BJ (cell line): ENCODE measurements at regions of chr15 and their contacts with region 1.

Region 1: DNA sequence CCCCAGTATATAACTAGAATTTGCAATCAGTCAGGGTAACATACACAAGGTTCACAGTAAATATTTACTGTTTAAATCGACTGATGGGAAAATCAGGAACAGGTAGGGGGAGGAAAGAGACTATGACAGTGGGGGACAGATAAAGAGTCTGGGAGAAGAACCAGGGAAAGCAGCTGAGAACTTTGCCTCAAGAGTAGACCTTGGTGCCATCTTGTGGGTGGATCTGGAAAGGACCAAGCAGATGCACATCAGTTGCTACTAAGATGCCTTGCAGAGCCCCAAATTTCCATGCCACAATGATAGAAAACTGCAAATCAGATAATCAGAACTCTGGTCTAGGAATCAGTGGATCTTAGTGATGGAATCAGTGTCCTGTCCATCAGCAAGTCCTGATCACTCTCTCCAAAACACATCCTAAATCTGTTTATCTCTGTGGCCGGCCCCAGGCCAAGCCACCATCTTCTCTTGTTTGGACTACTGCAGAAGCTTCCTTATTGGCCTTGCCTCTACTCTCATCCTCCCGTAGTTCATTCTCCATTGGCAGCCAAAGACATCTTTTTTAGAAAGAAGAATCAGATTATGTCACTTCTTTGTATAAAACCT is 62.7 kb downstream of the PDE8A start:
- DNase-seq: no peak
- H3K4me3 ChIP-seq: no peak overlapping the region
- H3K27me3 ChIP-seq: no peaks in the 10 kb centered on the region
- CTCF ChIP-seq: peak; percentile 78

Region 2: DNA sequence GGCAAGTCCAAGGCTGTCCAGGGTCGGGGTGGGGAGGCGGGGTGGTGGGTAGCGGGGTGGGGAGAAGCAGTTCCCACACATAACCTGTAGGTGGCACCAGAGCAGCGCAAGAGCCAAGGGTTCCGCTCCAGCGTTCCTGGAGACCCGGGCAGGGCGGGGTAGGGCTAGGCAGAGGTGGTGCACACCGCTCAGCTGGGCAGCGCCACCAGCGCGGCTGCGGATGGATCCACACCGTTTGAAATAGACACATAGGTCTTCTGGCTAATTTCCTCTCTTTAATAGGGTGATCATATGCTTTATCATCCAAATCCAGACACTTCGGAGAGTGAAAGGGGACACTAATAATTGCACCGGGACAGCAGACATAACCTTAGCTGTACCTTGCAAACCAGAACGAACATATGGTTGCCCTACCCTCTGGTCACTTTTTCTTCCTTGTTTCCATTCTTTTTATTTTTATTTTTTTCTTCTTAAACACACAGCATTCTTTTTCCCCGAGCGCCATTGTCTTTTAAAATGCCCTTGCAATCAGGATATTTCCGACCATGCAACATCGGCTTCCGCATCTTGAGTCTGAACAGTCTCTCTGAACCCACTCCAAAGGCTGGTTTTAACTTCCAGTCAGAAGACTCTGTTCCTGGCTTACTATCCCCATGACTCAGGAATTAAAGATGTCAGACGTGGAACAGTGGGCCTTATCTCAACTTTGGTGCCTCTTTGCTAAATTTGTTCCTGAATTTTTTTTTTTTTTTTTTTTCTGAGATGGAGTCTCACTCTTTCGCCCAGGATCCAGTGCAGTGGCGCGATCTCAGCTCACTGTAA is 456.1 kb before region 1 on chr15:
- CTCF ChIA-PET with region 1: interaction called, 10 read pairs
- POLR2A ChIA-PET with region 1: no interaction called
- DNase-seq: no peak
- H3K4me3 ChIP-seq: peak overlapping the region; percentile 39
- H3K27me3 ChIP-seq: peaks cover 2% of the 10 kb centered on the region
- CTCF ChIP-seq: peak; percentile 85

Region 3: GRCh38 chr15:84600851-84601838 is 443.2 kb before region 1 on chr15 and contains the start of gene ZSCAN2:
- CTCF ChIA-PET with region 1: interaction called, 11 read pairs
- POLR2A ChIA-PET with region 1: no interaction called
- DNase-seq: peak; percentile 59
- H3K4me3 ChIP-seq: peak within 1 kb of the TSS; percentile 97
- H3K27me3 ChIP-seq: no peaks in the 10 kb centered on the region
- CTCF ChIP-seq: no peak
- polyA plus RNA-seq, gene ZSCAN2: 5.9 and 6.3 TPM in 2 replicates

Region 4: GRCh38 chr15:84947947-84948830 is 96.2 kb before region 1 on chr15:
- CTCF ChIA-PET with region 1: interaction called, 65 read pairs
- POLR2A ChIA-PET with region 1: no interaction called
- DNase-seq: peak; percentile 82
- H3K4me3 ChIP-seq: no peak overlapping the region
- H3K27me3 ChIP-seq: no peaks in the 10 kb centered on the region
- CTCF ChIP-seq: no peak

Region 5: DNA sequence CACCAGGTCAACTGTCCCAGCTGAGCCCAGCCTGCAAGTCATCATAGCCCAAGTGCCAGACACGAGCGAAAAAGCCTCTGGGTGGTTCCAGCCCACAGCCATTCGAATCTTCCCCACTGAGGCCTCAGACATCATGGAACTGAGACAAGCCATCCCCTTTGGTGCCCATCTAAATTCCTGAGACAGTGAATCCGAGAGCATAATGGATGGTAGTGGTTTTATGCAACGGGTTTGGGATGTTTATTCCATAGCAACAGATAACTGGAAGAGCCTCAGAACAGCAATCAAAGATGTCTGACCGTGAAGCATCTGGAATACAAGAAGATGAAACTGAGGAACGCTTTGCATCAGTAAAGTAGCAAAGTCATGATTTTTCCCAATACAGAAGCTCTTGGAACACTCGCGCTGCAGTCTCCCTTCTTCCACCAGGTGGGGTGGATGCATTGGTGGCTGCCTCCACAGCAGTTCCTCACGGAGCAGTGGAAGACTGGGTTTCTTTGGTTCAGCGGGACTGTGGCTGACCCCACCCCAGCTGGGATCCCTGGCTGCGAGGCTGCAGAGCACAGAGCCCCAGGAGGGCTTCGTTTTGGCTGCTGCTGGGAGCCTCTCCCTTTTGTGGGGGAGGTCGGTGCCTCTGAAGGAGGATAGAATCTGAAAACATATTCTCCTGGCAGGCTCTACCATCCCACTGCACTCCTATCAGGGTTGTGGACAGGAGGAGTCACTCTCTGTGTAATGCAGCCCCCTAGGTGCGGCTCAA is 89.1 kb before region 1 on chr15:
- CTCF ChIA-PET with region 1: interaction called, 65 read pairs
- POLR2A ChIA-PET with region 1: no interaction called
- DNase-seq: no peak
- H3K4me3 ChIP-seq: no peak overlapping the region
- H3K27me3 ChIP-seq: no peaks in the 10 kb centered on the region; the same call in 1 of the 2 replicates
- CTCF ChIP-seq: peak; percentile 91

Region 6: DNA sequence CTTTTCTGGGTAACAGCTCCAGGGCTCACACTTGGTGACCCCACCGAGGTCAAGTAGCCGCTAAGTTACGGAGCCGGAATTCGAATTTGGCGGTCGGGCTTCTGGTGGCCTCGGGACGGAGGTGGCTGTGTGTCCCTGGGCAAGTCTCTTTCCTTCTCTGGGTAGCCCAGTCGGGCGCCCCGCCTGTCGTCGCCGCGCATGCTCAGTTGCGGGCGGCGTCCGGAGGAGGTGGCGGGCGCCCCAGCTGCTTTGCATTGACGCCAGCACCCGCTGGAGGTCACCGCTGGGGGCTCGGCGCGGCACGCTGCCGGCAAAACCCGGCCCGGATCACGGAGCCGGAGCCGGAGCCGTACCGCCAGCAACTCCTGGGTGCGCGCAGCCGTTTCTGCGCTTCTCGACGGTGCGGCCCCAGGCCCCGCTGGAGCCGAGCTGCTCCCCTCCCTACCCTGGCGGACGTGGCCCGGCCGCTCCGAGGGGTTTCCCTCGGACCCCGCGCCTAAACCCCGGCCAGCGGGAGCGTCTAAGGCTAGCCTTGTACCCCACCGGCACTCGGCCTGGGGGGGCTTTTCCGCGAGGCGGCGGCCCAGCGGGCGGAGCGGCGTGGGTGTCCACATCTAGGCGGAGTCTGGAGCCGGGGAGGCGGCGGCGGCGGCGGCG is 63.2 kb before region 1 on chr15:
- CTCF ChIA-PET with region 1: interaction called, 25 read pairs
- POLR2A ChIA-PET with region 1: no interaction called
- DNase-seq: peak; percentile 59
- H3K4me3 ChIP-seq: peak overlapping the region; percentile 59
- H3K27me3 ChIP-seq: no peaks in the 10 kb centered on the region
- CTCF ChIP-seq: no peak

Region 7: GRCh38 chr15:85030301-85031049 is 13.9 kb before region 1 on chr15:
- CTCF ChIA-PET with region 1: interaction called, 20 read pairs
- POLR2A ChIA-PET with region 1: no interaction called
- DNase-seq: no peak
- H3K4me3 ChIP-seq: no peak overlapping the region
- H3K27me3 ChIP-seq: no peaks in the 10 kb centered on the region
- CTCF ChIP-seq: no peak